Common myeloid progenitor, CD34-positive (primary cell): ENCODE measurements at regions of chr3 and their contacts with region 1.

Region 1: GRCh38 chr3:184672977-184673870 is 38.6 kb downstream of the MAGEF1 start:
- DNase-seq: no peak
- H3K4me3 ChIP-seq: no peak overlapping the region
- H3K27ac ChIP-seq: no peak overlapping the region
- H3K4me1 ChIP-seq: peaks cover 5 to 23% (median 16%) of the 10 kb centered on the region in 4 experiments
- H3K27me3 ChIP-seq: no peaks in the 10 kb centered on the region

Region 2: DNA sequence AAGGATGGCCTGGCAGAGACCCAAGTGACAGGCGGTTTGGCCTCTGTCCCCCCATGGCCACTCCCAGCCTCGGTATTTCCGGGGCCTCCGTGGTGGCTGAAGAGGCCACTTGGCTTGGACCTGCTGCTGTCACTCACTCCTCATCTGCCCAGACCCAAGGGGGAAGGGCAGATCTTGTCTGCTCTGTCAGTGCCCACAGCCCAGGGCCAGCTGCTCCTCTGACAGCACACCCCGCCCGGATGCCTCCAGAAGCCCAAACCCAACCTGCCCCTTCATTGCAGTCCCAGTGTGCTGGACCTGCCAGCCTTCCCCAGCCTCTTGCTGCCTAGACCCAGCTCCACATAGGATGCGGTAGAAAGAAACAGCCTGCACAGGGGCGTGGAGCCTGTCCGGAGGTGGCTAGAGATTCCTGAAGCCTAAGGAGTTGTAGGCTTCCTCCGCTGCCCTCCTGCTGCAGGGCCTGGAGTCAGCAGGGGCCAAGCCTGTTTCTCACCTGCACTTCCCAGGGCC is 13.4 kb before region 1 on chr3:
- CTCF ChIA-PET with region 1: interaction called, 10 read pairs
- POLR2A ChIA-PET with region 1: no interaction called
- DNase-seq: no peak
- H3K4me3 ChIP-seq: no peak overlapping the region
- H3K27ac ChIP-seq: no peak overlapping the region
- H3K4me1 ChIP-seq: peaks cover 2 to 31% (median 21%) of the 10 kb centered on the region in 4 experiments
- H3K27me3 ChIP-seq: no peaks in the 10 kb centered on the region

Region 3: GRCh38 chr3:184683234-184683633 is 10.0 kb after region 1 on chr3:
- CTCF ChIA-PET with region 1: no interaction called
- POLR2A ChIA-PET with region 1: no interaction called
- DNase-seq: no peak
- H3K4me3 ChIP-seq: no peak overlapping the region
- H3K27ac ChIP-seq: no peak overlapping the region
- H3K4me1 ChIP-seq: peaks cover 5 to 51% (median 26%) of the 10 kb centered on the region in 4 experiments
- H3K27me3 ChIP-seq: no peaks in the 10 kb centered on the region